Posterior vena cava (tissue), 2 donors: ENCODE measurements at regions of chr7 and their contacts with region 1.

Region 1: GRCh38 chr7:130758429-130759056 is 24.5 kb upstream of the KLF14 start:
- DNase-seq: no peak

Region 2: GRCh38 chr7:130400120-130400591 is 358.4 kb before region 1 on chr7:
- intact Hi-C with region 1: loop called in 1 of 2 experiments (anchors 10 kb)
- DNase-seq: peak; percentile 17